CD8-positive, alpha-beta T cell (primary cell): ENCODE measurements at regions of chr11 and their contacts with region 1.

Region 1: GRCh38 chr11:65888163-65888814 is at the start of gene FIBP:
- DNase-seq: peak; percentile 89 to 98 (median 95)
- ATAC-seq: peak; percentile 57
- H3K4me3 ChIP-seq: peak within 1 kb of the TSS; percentile 57 to 87
- H3K4me3 Mint-ChIP-seq: peak within 1 kb of the TSS; percentile 83
- H3K27ac ChIP-seq: peak within 1 kb of the TSS; percentile 73 to 97
- H3K27ac Mint-ChIP-seq: peak within 1 kb of the TSS; percentile 98
- H3K4me1 ChIP-seq: peaks cover 48% of the 10 kb centered on the region
- H3K4me1 Mint-ChIP-seq: peaks cover 62% of the 10 kb centered on the region
- H3K27me3 ChIP-seq: no peaks in the 10 kb centered on the region
- H3K27me3 Mint-ChIP-seq: no peaks in the 10 kb centered on the region
- CTCF ChIP-seq: peak; percentile 71
- total RNA-seq, gene FIBP: 16.5 to 19.3 TPM

Region 2: DNA sequence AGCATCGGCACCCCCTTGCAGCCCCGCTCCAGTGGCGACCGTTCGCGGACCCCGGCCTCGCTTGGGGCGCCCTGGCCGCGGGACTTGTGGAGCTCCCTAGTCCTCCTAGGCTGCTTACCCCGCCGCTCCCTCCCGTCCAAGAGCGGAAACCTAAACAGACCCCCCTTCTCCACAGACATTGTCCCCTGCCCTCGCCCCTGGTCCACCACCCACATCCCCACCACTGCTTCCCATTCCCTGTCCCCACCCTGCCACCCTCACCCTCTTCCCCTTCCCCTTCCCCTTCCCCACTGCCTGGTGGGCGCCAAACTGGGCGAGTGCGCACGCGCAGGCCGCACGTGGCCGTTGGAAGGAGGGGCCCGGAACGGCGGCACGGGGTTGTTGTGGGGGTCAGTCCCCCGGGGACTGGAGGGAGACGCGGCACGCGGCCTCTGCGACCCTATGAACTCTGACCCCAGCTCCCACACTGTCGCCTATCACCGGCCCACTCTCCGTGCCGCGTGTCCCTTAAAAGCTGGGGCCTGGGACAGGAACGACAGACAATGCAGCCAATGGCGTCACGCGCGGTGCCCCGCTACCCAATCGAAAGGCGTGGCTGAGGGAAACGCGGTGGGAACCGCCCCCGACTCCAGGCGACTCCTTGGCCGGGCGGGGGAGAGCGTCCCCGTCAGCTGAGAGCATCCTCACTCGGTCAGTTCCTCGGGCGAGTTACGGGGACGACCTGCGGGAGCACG is 54.8 kb before region 1 on chr11 and contains the start of gene SNX32:
- CTCF ChIA-PET with region 1: interaction called, 12 read pairs
- POLR2A ChIA-PET with region 1: interaction called, 4 read pairs
- intact Hi-C with region 1: loop called in 1 of 2 experiments (anchors 2 kb)
- DNase-seq: peak; percentile 90 to 97 (median 94)
- ATAC-seq: peak; percentile 99
- H3K4me3 ChIP-seq: peak within 1 kb of the TSS; percentile 79 to 91
- H3K4me3 Mint-ChIP-seq: no peak within 1 kb of the TSS
- H3K27ac ChIP-seq: peak within 1 kb of the TSS; percentile 66 to 80
- H3K27ac Mint-ChIP-seq: peak within 1 kb of the TSS; percentile 64
- H3K4me1 ChIP-seq: peaks cover 17% of the 10 kb centered on the region
- H3K4me1 Mint-ChIP-seq: peaks cover 6% of the 10 kb centered on the region
- H3K27me3 ChIP-seq: peaks cover 0 to 3% of the 10 kb centered on the region in 2 experiments
- H3K27me3 Mint-ChIP-seq: no peaks in the 10 kb centered on the region
- CTCF ChIP-seq: no peak
- total RNA-seq, gene SNX32: 0.52 to 0.69 TPM

Region 3: DNA sequence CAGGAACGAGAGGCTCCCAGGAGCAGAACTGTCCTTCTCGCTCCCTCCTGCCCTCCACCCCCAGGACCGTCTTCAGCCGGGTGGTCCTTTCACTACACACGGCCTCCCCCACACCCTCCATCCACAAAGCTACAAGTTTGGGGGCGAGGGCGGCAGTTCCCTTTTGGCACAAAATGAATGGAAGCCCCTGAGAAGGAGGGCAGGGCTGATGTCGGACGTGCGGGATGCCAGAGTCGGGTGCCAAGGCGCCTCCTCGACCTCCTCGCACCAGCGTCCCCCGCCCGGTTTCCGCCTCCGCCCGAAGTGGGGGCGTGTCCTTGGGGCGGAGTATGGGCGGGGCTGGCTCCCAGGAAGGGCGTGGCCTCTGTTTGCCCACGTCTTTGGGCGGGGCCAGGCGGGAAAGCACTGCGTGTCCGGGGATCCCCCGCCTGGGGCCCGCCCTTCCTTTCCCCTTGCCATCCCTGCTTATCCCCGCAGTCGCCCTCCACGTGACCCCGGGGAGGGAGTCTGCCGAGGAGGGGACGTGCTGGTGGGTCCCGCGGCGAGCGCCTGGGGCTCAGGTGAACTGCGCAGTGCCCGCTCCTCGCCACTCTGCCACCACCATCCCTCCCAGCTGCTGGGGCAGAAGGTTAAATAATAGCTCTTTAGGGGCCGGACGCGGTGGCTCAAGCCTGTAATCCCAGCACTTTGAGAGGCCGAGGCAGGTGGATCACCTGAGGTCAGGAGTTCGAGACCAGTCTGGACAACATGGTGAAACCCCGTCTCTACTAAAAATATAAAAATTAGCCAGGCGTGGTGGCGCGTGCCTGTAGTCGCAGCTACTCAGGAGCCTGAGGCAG is 14.8 kb before region 1 on chr11:
- CTCF ChIA-PET with region 1: interaction called, 131 read pairs
- POLR2A ChIA-PET with region 1: interaction called, 43 read pairs
- intact Hi-C with region 1: loop called in 1 of 2 experiments (anchors 2 kb)
- DNase-seq: peak; percentile 93 to 99 (median 97)
- ATAC-seq: peak; percentile 98
- H3K4me3 ChIP-seq: peak overlapping the region; percentile 56 to 59
- H3K4me3 Mint-ChIP-seq: peak overlapping the region; percentile 89
- H3K27ac ChIP-seq: peak overlapping the region; percentile 74 to 94
- H3K27ac Mint-ChIP-seq: peak overlapping the region; percentile 91
- H3K4me1 ChIP-seq: peaks cover 34% of the 10 kb centered on the region
- H3K4me1 Mint-ChIP-seq: peaks cover 42% of the 10 kb centered on the region
- H3K27me3 ChIP-seq: no peaks in the 10 kb centered on the region
- H3K27me3 Mint-ChIP-seq: no peaks in the 10 kb centered on the region
- CTCF ChIP-seq: no peak

Region 4: DNA sequence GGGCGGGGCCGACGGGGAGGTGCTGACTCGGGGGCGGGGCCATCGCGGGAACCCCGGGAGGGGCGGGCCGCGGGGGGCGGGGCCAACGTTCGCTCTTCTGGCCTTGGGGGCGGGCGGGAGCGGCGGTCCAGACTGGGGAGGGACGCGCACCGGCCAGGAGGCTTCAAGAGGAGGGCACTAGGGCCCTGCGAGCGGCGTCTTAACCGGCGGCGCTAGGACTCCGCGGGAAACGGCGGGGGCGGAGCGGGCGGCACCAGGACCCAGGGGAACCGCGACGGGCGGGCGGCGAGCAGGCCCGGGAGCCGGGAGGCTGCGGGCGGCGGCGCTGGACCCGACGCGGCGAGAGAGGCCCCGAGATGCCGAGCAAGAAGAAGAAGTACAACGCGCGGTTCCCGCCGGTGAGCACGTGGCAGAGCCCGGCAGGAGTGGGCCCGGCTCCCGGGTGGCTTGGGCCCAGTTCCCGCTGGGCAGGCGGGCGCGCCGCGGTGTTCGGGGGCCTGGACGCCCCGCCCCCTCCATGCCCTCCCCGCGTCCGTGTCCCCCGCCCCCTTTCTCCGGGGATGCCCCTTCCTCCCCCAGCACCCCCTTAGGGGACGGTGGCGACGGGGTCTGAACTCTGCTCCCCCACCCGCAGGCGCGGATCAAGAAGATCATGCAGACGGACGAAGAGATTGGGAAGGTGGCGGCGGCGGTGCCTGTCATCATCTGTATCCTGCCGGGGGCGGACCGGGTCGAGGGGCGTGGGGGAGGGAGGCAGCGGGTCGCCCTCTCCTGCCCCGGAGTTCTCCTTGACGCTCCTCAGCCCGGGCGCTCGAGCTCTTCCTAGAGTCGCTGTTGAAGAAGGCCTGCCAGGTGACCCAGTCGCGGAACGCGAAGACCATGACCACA is 31.1 kb after region 1 on chr11 and contains the start of gene DRAP1:
- CTCF ChIA-PET with region 1: interaction called, 44 read pairs
- POLR2A ChIA-PET with region 1: interaction called, 60 read pairs
- intact Hi-C with region 1: loop called (anchors 1 kb)
- DNase-seq: peak; percentile 98 to 100 (median 99)
- ATAC-seq: peak; percentile 89
- H3K4me3 ChIP-seq: peak within 1 kb of the TSS; percentile 94
- H3K4me3 Mint-ChIP-seq: peak within 1 kb of the TSS; percentile 91
- H3K27ac ChIP-seq: peak within 1 kb of the TSS; percentile 79 to 81
- H3K27ac Mint-ChIP-seq: peak within 1 kb of the TSS; percentile 93
- H3K4me1 ChIP-seq: peaks cover 41% of the 10 kb centered on the region
- H3K4me1 Mint-ChIP-seq: peaks cover 51% of the 10 kb centered on the region
- H3K27me3 ChIP-seq: no peaks in the 10 kb centered on the region
- H3K27me3 Mint-ChIP-seq: no peaks in the 10 kb centered on the region
- CTCF ChIP-seq: no peak
- total RNA-seq, gene DRAP1: 62.2 to 63.1 TPM

Region 5: GRCh38 chr11:65961232-65961901 is 73.1 kb after region 1 on chr11 and contains the start of gene SART1:
- CTCF ChIA-PET with region 1: interaction called, 33 read pairs
- POLR2A ChIA-PET with region 1: interaction called, 16 read pairs
- intact Hi-C with region 1: loop called (anchors 1 kb)
- DNase-seq: peak; percentile 92 to 99 (median 96)
- ATAC-seq: peak; percentile 88
- H3K4me3 ChIP-seq: peak within 1 kb of the TSS; percentile 62 to 65
- H3K4me3 Mint-ChIP-seq: peak within 1 kb of the TSS; percentile 98
- H3K27ac ChIP-seq: peak within 1 kb of the TSS; percentile 83 to 85
- H3K27ac Mint-ChIP-seq: peak within 1 kb of the TSS; percentile 99
- H3K4me1 ChIP-seq: peaks cover 38% of the 10 kb centered on the region
- H3K4me1 Mint-ChIP-seq: peaks cover 53% of the 10 kb centered on the region
- H3K27me3 ChIP-seq: no peaks in the 10 kb centered on the region
- H3K27me3 Mint-ChIP-seq: no peaks in the 10 kb centered on the region
- CTCF ChIP-seq: no peak
- total RNA-seq, gene SART1: 102 to 123 TPM

Region 6: GRCh38 chr11:66001942-66002647 is 113.8 kb after region 1 on chr11 and contains the starts of genes BANF1 and EIF1AD:
- CTCF ChIA-PET with region 1: interaction called, 4 read pairs
- POLR2A ChIA-PET with region 1: interaction called, 11 read pairs
- intact Hi-C with region 1: loop called in 1 of 2 experiments (anchors 1 kb)
- DNase-seq: peak; percentile 85 to 98 (median 92)
- ATAC-seq: peak; percentile 83
- H3K4me3 ChIP-seq: peak within 1 kb of the TSS; percentile 80 to 98
- H3K4me3 Mint-ChIP-seq: peak within 1 kb of the TSS; percentile 99
- H3K27ac ChIP-seq: peak within 1 kb of the TSS; percentile 93 to 95
- H3K27ac Mint-ChIP-seq: peak within 1 kb of the TSS; percentile 98
- H3K4me1 ChIP-seq: peaks cover 21% of the 10 kb centered on the region
- H3K4me1 Mint-ChIP-seq: peaks cover 43% of the 10 kb centered on the region
- H3K27me3 ChIP-seq: no peaks in the 10 kb centered on the region
- H3K27me3 Mint-ChIP-seq: no peaks in the 10 kb centered on the region
- CTCF ChIP-seq: no peak
- total RNA-seq, gene BANF1: 31.6 to 34.0 TPM
- total RNA-seq, gene EIF1AD: 119 to 126 TPM

Region 7: GRCh38 chr11:66015454-66015881 is 127.2 kb after region 1 on chr11:
- CTCF ChIA-PET with region 1: no interaction called
- POLR2A ChIA-PET with region 1: no interaction called
- intact Hi-C with region 1: no loop called
- DNase-seq: no peak
- ATAC-seq: no peak
- H3K4me3 ChIP-seq: no peak overlapping the region
- H3K4me3 Mint-ChIP-seq: no peak overlapping the region
- H3K27ac ChIP-seq: no peak overlapping the region
- H3K27ac Mint-ChIP-seq: no peak overlapping the region
- H3K4me1 ChIP-seq: peaks cover 4% of the 10 kb centered on the region
- H3K4me1 Mint-ChIP-seq: peaks cover 3% of the 10 kb centered on the region
- H3K27me3 ChIP-seq: peaks cover 14 to 21% of the 10 kb centered on the region in 2 experiments
- H3K27me3 Mint-ChIP-seq: peaks cover 12% of the 10 kb centered on the region
- CTCF ChIP-seq: no peak